IMR-90 (cell line): ENCODE measurements at regions of chr20 and their contacts with region 1.

Region 1: GRCh38 chr20:51372176-51372803 is 170.2 kb downstream of the NFATC2 start:
- DNase-seq: peak; percentile 74
- ATAC-seq: peak; percentile 98
- H3K4me3 ChIP-seq: no peak overlapping the region
- H3K27ac ChIP-seq: no peak overlapping the region; the same call in 1 of the 2 replicates
- H3K4me1 ChIP-seq: peaks cover 7% of the 10 kb centered on the region
- H3K27me3 ChIP-seq: no peaks in the 10 kb centered on the region
- CTCF ChIP-seq: peak; percentile 94
- POLR2A ChIP-seq: peak; percentile 48
- RAD21 ChIP-seq: peak; percentile 97

Region 2: GRCh38 chr20:51624157-51624731 is 252.0 kb after region 1 on chr20:
- CTCF ChIA-PET with region 1: interaction called, 3 read pairs
- POLR2A ChIA-PET with region 1: no interaction called
- dilution Hi-C with region 1: no loop called
- in situ Hi-C with region 1: no loop called
- intact Hi-C with region 1: loop called (anchors 1 kb)
- DNase-seq: peak; percentile 57
- ATAC-seq: peak; percentile 85
- H3K4me3 ChIP-seq: no peak overlapping the region
- H3K27ac ChIP-seq: no peak overlapping the region
- H3K4me1 ChIP-seq: no peaks in the 10 kb centered on the region
- H3K27me3 ChIP-seq: no peaks in the 10 kb centered on the region
- CTCF ChIP-seq: peak; percentile 67
- POLR2A ChIP-seq: no peak
- RAD21 ChIP-seq: peak; percentile 65

Region 3: DNA sequence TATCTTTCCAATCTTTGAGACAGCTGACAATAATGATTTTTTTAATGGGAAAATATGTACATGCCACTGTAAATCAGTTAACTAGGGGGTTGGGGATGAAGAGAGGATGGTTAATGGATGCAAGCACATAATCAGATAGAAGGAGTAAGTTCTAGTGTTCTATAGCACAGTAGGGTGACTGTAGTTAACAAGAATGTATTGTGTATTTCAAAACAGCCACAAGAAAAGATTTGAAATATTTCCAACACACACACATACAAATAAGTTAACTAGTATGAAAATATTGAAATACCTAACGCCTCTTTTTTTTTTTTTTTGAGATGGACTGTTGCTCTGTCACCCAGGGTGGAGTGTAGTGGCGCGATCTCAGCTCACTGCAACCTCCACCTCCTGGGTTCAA is 583.5 kb after region 1 on chr20:
- CTCF ChIA-PET with region 1: no interaction called
- POLR2A ChIA-PET with region 1: no interaction called
- dilution Hi-C with region 1: no loop called
- in situ Hi-C with region 1: no loop called
- intact Hi-C with region 1: loop called (anchors 5 kb)
- DNase-seq: peak; percentile 65
- ATAC-seq: peak; percentile 77
- H3K4me3 ChIP-seq: no peak overlapping the region
- H3K27ac ChIP-seq: no peak overlapping the region
- H3K4me1 ChIP-seq: no peaks in the 10 kb centered on the region
- H3K27me3 ChIP-seq: no peaks in the 10 kb centered on the region; the same call in 1 of the 2 replicates
- CTCF ChIP-seq: no peak
- POLR2A ChIP-seq: no peak
- RAD21 ChIP-seq: no peak